Adrenal gland (tissue), 19 donors: ENCODE measurements at regions of chr22 and their contacts with region 1.

Region 1: GRCh38 chr22:40679964-40680818 is 907 bp downstream of the MCHR1 start:
- DNase-seq: no peak
- H3K4me3 ChIP-seq: no peak overlapping the region
- H3K27ac ChIP-seq: no peak overlapping the region
- H3K4me1 ChIP-seq: peaks cover 3 to 10% of the 10 kb centered on the region in 2 donors
- H3K27me3 ChIP-seq: peaks cover 7% of the 10 kb centered on the region
- CTCF ChIP-seq: no peak
- POLR2A ChIP-seq: no peak

Region 2: DNA sequence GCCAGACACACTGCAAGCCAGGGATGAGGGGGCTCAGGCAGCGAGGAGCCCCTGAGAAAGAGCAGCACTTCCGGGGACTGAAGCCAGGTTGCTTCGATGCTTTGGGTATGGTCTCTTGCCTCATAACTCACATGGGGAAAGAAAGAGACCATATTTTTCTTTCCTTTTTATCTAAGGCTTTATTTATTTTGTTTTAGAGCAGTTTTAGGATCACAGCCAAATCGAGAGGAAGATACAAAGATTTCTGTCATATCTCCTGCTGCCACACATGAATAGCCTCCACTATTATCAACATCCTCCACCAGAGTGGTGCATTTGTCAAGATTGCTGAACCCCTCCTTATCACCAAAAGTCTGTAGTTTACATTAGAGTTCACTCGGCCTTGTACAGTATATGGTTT is 358.2 kb before region 1 on chr22:
- intact Hi-C with region 1: no loop called
- DNase-seq: no peak
- H3K4me3 ChIP-seq: no peak overlapping the region
- H3K27ac ChIP-seq: no peak overlapping the region
- H3K4me1 ChIP-seq: no peaks in the 10 kb centered on the region
- H3K27me3 ChIP-seq: no peaks in the 10 kb centered on the region
- CTCF ChIP-seq: no peak
- POLR2A ChIP-seq: no peak

Region 3: GRCh38 chr22:40533712-40534378 is 146.3 kb before region 1 on chr22:
- intact Hi-C with region 1: no loop called
- DNase-seq: no peak
- H3K4me3 ChIP-seq: peak overlapping the region in 1 of 4 donors; percentile 23
- H3K27ac ChIP-seq: peak overlapping the region in 2 of 5 donors; percentile 25 to 36
- H3K4me1 ChIP-seq: peaks cover 23 to 44% of the 10 kb centered on the region in 2 donors
- H3K27me3 ChIP-seq: no peaks in the 10 kb centered on the region
- CTCF ChIP-seq: no peak
- POLR2A ChIP-seq: no peak

Region 4: GRCh38 chr22:40757071-40757470 is 76.9 kb after region 1 on chr22:
- intact Hi-C with region 1: loop called (anchors 5 kb)
- DNase-seq: no peak
- H3K4me3 ChIP-seq: no peak overlapping the region
- H3K27ac ChIP-seq: no peak overlapping the region
- H3K4me1 ChIP-seq: no peaks in the 10 kb centered on the region
- H3K27me3 ChIP-seq: no peaks in the 10 kb centered on the region
- CTCF ChIP-seq: no peak
- POLR2A ChIP-seq: no peak

Region 5: DNA sequence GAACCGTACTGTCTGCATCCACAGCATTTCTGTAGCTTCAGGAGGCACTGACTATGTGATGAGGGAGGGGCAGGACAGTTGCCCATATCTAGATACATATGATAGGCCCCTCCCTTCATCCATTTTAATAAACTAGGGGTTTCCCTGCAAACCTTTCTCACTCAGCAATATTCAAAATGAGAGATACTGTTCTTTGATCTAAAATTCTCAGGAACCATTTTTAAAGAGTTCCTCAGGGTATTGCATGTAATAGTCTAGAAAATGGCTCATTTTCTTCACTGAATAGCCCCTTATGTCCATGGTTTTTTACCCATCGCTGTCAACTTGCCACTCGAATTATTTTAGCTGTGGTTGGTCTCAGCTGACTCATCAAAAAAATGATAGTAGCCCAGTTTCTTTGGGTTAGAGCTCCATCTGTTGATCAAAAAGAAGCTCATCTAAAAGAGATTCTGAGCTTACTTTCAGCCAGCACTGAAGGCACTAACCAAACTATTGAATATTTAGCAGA is 218.7 kb after region 1 on chr22:
- intact Hi-C with region 1: loop called (anchors 10 kb)
- DNase-seq: peak in 1 of 7 donors; percentile 29
- H3K4me3 ChIP-seq: no peak overlapping the region
- H3K27ac ChIP-seq: no peak overlapping the region
- H3K4me1 ChIP-seq: no peaks in the 10 kb centered on the region
- H3K27me3 ChIP-seq: no peaks in the 10 kb centered on the region
- CTCF ChIP-seq: peak; percentile 27 to 62 (median 54)
- POLR2A ChIP-seq: no peak